Activated T-helper 1 cell treated with anti-CD3 and anti-CD28 coated beads, Interleukin-12 subunit alpha, Interleukin-12 subunit beta, Interleukin-2, Interleukin-4 antibody, amounts not matched to agents 30 ng/mL and 10 ng/mL and 1 ng/mL, durations not matched to agents 14 hours and 24 hours and 36 hours (primary cell): ENCODE measurements at regions of chr4 and their contacts with region 1.

Region 1: GRCh38 chr4:122689972-122690371 is 42.5 kb upstream of the BBS12 start:
- DNase-seq: peak; percentile 22
- H3K4me3 Mint-ChIP-seq: peak overlapping the region; percentile 43
- H3K27ac Mint-ChIP-seq: peak overlapping the region; percentile 71
- H3K4me1 Mint-ChIP-seq: peaks cover 66% of the 10 kb centered on the region
- H3K27me3 Mint-ChIP-seq: no peaks in the 10 kb centered on the region

Region 2: DNA sequence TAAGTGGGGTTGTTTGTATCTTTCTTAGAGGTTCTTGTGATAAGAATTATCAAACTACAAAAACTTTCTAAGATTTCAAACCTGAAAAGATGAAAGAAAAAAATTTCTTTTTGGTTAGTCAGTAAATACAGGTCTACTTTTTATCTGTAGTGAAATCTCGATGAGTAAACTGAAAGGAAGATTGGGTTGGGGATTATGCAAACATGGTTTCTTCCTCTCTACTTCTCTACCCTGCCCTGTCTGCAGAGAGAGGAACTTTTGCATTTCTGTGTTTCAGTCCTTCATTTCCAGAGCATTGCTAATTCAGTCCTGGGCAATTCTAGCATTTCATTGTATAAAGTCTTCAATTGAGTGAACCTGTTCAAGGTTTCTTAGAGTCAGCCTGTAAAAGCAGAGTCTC is 181.9 kb before region 1 on chr4:
- intact Hi-C with region 1: no loop called
- DNase-seq: no peak
- H3K4me3 Mint-ChIP-seq: peak overlapping the region; percentile 71
- H3K27ac Mint-ChIP-seq: peak overlapping the region; percentile 89
- H3K4me1 Mint-ChIP-seq: peaks cover 69% of the 10 kb centered on the region
- H3K27me3 Mint-ChIP-seq: no peaks in the 10 kb centered on the region

Region 3: DNA sequence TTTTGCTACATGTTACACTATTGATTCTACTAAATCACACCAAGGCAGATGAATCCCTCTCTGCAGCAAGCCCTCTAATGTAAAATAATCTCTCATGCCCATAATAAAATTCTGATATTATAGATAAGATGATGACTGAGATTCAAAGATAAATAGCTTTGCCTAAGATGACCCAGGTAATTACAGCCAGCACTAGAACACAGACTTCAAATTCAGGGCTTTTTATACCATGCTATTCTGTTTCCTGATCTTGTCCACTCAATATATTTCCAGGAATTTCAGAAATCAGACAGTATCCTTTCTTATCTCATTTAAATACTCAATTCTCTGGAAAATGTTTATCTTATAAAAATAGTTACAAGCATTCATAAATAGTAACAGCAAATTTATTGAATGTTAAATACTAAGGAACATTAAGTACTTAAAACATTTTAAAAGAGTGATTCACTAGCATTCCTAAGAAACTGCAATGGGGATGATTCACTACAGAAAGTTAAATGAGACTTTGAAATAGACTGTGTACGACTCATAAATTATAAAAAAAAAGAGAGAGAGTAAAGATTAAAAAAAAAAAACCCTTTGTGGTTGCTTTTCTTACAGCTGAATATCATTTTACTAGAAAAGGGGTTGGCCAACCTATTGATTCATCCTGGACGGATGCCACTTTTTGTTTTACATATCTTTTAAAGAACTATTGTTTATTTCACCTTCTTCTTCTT is 23.3 kb before region 1 on chr4:
- intact Hi-C with region 1: loop called (anchors 1 kb)
- DNase-seq: no peak
- H3K4me3 Mint-ChIP-seq: peak overlapping the region; percentile 69
- H3K27ac Mint-ChIP-seq: peak overlapping the region; percentile 74
- H3K4me1 Mint-ChIP-seq: peaks cover 88% of the 10 kb centered on the region
- H3K27me3 Mint-ChIP-seq: no peaks in the 10 kb centered on the region

Region 4: DNA sequence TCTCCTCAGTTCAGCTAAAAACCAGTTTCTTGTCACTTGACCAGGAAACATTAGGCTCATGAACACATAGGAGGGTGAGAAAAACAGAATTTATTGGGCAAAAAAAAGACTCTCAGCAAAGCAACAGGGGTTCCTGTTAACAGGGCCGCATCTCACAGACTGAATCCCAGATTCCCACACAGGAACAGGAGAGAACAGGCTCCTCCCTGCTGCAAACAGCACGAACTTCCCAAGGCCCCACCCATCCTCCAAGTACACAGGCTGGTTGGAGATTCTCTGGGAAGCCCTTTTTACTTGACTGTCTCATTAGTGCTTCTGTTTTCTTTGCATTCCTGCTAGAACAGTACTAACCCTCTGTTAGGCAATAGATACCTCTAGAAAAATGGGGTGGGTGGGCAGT is 16.7 kb before region 1 on chr4:
- intact Hi-C with region 1: loop called (anchors 1 kb)
- DNase-seq: no peak
- H3K4me3 Mint-ChIP-seq: no peak overlapping the region
- H3K27ac Mint-ChIP-seq: peak overlapping the region; percentile 49
- H3K4me1 Mint-ChIP-seq: peaks cover 69% of the 10 kb centered on the region
- H3K27me3 Mint-ChIP-seq: no peaks in the 10 kb centered on the region